Activated CD8-positive, alpha-beta T cell treated with anti-CD3 and anti-CD28 coated beads for 36 hours (primary cell): ENCODE measurements at regions of chr11 and their contacts with region 1.

Region 1: GRCh38 chr11:3854977-3855807 is at the start of gene STIM1:
- DNase-seq: peak; percentile 98
- ATAC-seq: peak; percentile 79
- H3K4me3 Mint-ChIP-seq: peak within 1 kb of the TSS; percentile 87
- H3K27ac Mint-ChIP-seq: peak within 1 kb of the TSS; percentile 98
- H3K4me1 Mint-ChIP-seq: peaks cover 60% of the 10 kb centered on the region
- H3K27me3 Mint-ChIP-seq: no peaks in the 10 kb centered on the region
- CTCF ChIP-seq: peak; percentile 89
- total RNA-seq, gene STIM1: 60.8 to 61.4 TPM

Region 2: GRCh38 chr11:3674189-3674588 is 181.0 kb before region 1 on chr11:
- CTCF ChIA-PET with region 1: no interaction called
- POLR2A ChIA-PET with region 1: no interaction called
- intact Hi-C with region 1: no loop called
- DNase-seq: no peak
- ATAC-seq: no peak
- H3K4me3 Mint-ChIP-seq: no peak overlapping the region
- H3K27ac Mint-ChIP-seq: no peak overlapping the region
- H3K4me1 Mint-ChIP-seq: no peaks in the 10 kb centered on the region
- H3K27me3 Mint-ChIP-seq: no peaks in the 10 kb centered on the region
- CTCF ChIP-seq: no peak

Region 3: GRCh38 chr11:3753110-3753509 is 102.1 kb before region 1 on chr11:
- CTCF ChIA-PET with region 1: no interaction called
- POLR2A ChIA-PET with region 1: no interaction called
- intact Hi-C with region 1: no loop called
- DNase-seq: no peak
- ATAC-seq: no peak
- H3K4me3 Mint-ChIP-seq: no peak overlapping the region
- H3K27ac Mint-ChIP-seq: peak overlapping the region; percentile 3
- H3K4me1 Mint-ChIP-seq: no peaks in the 10 kb centered on the region
- H3K27me3 Mint-ChIP-seq: no peaks in the 10 kb centered on the region
- CTCF ChIP-seq: no peak

Region 4: DNA sequence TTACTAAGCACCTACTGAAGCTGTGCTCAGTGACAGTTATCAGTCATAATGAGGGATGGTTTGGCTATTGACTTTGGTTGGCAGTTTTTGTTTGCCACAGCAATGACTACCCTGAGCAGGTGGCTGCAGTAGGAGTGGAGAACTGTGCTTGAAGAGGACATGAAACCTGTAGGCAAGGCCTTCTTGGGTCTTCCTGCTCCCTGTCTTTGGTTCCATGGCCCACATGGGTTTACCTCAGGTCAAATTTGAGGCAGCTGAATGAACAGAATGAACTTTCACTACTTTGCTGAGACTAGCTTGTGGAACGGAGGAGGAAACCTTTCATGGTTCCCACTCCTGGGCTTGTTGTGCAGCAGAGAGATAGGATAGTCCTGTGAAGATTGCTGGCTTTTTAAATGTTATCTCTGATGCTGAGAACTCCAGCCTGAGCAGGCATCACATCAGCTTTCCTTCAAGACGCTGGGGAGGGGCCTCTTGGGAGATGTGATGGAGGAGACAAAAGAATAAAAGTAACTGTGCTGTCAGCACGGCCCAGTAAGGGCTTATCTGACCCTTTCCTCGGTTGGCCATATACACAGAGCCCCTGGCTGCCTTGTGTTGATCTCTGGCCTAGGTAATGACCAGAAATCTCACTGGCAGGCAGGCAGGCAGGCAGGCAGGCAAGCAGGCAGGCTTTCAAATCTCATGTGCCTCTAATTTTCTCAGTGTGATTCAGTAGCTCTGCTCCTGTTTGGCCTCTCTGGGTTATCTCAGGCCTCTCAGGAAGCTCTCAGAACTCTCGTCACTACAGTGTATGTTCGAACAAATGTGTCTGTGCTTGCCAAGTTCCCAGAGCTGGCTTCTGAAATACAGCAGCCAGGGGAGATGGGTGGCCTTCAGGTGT is 12.3 kb after region 1 on chr11:
- CTCF ChIA-PET with region 1: interaction called, 274 read pairs
- POLR2A ChIA-PET with region 1: interaction called, 21 read pairs
- intact Hi-C with region 1: no loop called
- DNase-seq: peak; percentile 66
- ATAC-seq: peak; percentile 65
- H3K4me3 Mint-ChIP-seq: peak overlapping the region; percentile 51
- H3K27ac Mint-ChIP-seq: peak overlapping the region; percentile 94
- H3K4me1 Mint-ChIP-seq: peaks cover 85% of the 10 kb centered on the region
- H3K27me3 Mint-ChIP-seq: no peaks in the 10 kb centered on the region
- CTCF ChIP-seq: no peak

Region 5: DNA sequence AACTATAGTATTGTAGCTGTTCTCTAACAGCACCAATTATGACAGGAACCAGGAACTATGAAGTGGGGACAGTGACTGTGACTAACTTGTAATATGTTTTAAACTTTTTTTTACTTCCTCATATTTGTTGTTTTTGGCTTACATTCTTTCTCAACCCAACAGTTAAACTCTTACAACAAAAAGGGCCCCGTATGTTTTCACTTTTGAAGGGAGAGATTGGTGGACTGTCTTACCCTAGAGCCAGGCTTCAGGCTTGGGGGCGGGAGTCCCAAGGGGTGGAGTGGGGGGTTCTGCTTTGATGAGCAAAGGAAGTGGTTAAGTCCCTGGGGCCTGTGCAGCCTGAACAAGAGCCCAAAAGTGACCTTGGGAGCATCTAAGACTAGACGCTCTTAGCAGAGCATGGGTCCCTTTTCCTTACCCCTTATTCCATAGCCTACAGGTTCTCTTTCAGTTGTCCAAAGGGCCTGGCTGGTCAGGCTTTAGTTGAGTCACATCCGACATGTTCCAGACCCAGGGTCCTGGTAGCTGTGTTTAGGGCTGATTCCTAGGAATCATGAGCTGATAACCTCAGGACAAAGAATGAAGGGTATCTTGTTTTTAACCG is 39.0 kb after region 1 on chr11:
- CTCF ChIA-PET with region 1: interaction called, 13 read pairs
- POLR2A ChIA-PET with region 1: interaction called, 4 read pairs
- intact Hi-C with region 1: loop called (anchors 5 kb)
- DNase-seq: peak; percentile 55
- ATAC-seq: peak; percentile 92
- H3K4me3 Mint-ChIP-seq: no peak overlapping the region
- H3K27ac Mint-ChIP-seq: peak overlapping the region; percentile 83
- H3K4me1 Mint-ChIP-seq: peaks cover 54% of the 10 kb centered on the region
- H3K27me3 Mint-ChIP-seq: no peaks in the 10 kb centered on the region
- CTCF ChIP-seq: no peak

Region 6: GRCh38 chr11:3939211-3939610 is 84.0 kb after region 1 on chr11:
- CTCF ChIA-PET with region 1: interaction called, 23 read pairs
- POLR2A ChIA-PET with region 1: interaction called, 16 read pairs
- intact Hi-C with region 1: no loop called
- DNase-seq: no peak
- ATAC-seq: no peak
- H3K4me3 Mint-ChIP-seq: no peak overlapping the region
- H3K27ac Mint-ChIP-seq: peak overlapping the region; percentile 35
- H3K4me1 Mint-ChIP-seq: peaks cover 84% of the 10 kb centered on the region
- H3K27me3 Mint-ChIP-seq: no peaks in the 10 kb centered on the region
- CTCF ChIP-seq: no peak

Region 7: GRCh38 chr11:3971756-3972404 is 116.7 kb after region 1 on chr11:
- CTCF ChIA-PET with region 1: interaction called, 42 read pairs
- POLR2A ChIA-PET with region 1: interaction called, 14 read pairs
- intact Hi-C with region 1: no loop called
- DNase-seq: no peak
- ATAC-seq: no peak
- H3K4me3 Mint-ChIP-seq: no peak overlapping the region
- H3K27ac Mint-ChIP-seq: peak overlapping the region; percentile 25
- H3K4me1 Mint-ChIP-seq: peaks cover 61% of the 10 kb centered on the region
- H3K27me3 Mint-ChIP-seq: no peaks in the 10 kb centered on the region
- CTCF ChIP-seq: no peak

Region 8: GRCh38 chr11:4094348-4095291 is 239.4 kb after region 1 on chr11 and contains the start of gene RRM1:
- CTCF ChIA-PET with region 1: interaction called, 13 read pairs
- POLR2A ChIA-PET with region 1: interaction called, 3 read pairs
- intact Hi-C with region 1: no loop called
- DNase-seq: peak; percentile 95
- ATAC-seq: peak; percentile 97
- H3K4me3 Mint-ChIP-seq: peak within 1 kb of the TSS; percentile 94
- H3K27ac Mint-ChIP-seq: peak within 1 kb of the TSS; percentile 97
- H3K4me1 Mint-ChIP-seq: peaks cover 67% of the 10 kb centered on the region
- H3K27me3 Mint-ChIP-seq: no peaks in the 10 kb centered on the region
- CTCF ChIP-seq: no peak
- total RNA-seq, gene RRM1: 192 to 194 TPM